ENCODE measurements at regions of chr7 and their contacts with region 1.

Region 1: DNA sequence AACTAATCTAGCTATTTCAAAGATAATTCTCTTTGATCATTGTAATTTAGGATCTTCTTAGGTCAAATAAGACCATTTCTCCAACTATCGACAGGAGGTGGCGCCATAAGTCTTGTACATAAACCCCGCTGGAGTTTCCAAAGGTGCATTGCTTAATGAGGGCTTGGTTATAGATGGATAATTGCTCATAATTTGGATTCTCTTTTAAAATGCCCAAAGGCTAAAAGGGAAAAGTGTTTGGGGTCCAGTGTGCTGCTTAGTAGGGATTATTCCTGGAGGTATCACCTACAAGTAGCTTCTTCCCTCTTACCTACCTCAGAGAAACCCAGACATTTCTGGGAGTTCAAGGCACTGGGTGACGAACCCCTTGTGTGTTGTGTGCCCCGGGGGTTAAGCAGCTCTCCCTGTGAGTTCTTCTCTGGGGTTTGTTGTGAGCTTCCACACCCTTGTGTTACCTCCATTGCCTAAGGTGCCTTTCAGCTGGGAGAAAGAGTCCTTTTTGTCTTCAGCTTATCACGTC is 75.2 kb downstream of the PAXIP1 start:
- DNase-seq: no peak
- ATAC-seq: peak; percentile 86

Region 2: DNA sequence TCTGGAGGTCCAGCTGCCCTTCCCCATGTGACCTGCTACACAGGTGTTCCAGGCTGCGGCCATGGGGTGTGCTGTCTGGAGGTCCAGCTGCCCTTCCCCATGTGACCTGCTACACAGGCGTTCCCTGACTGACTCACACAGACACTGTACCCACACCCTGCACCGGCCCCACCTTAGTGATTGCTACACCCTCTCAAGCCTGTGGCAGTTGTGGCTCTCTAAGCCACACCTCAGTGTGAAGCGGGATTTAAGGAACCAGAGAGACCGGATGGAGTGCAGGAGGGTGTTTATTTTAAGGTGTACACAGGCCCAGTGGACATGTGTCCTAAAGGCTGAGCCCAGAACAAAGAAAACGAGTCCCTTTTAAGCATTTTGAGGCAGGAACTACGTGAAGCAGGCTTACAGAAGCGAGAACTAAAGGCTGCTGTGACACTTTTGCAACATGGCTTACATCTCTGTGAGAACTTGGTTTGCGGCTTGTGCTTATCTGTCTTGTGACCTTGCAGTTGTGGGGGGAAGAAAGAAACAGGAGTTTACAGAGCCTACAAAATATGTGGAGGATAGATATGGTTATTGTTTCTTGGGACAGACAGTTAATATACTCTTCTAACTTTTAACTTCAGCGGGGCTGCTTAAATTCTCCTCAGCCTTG is 251.1 kb before region 1 on chr7:
- intact Hi-C with region 1: no loop called
- DNase-seq: no peak
- ATAC-seq: no peak

Region 3: GRCh38 chr7:154881026-154881425 is 46.7 kb before region 1 on chr7:
- intact Hi-C with region 1: no loop called
- DNase-seq: no peak
- ATAC-seq: no peak

Region 4: DNA sequence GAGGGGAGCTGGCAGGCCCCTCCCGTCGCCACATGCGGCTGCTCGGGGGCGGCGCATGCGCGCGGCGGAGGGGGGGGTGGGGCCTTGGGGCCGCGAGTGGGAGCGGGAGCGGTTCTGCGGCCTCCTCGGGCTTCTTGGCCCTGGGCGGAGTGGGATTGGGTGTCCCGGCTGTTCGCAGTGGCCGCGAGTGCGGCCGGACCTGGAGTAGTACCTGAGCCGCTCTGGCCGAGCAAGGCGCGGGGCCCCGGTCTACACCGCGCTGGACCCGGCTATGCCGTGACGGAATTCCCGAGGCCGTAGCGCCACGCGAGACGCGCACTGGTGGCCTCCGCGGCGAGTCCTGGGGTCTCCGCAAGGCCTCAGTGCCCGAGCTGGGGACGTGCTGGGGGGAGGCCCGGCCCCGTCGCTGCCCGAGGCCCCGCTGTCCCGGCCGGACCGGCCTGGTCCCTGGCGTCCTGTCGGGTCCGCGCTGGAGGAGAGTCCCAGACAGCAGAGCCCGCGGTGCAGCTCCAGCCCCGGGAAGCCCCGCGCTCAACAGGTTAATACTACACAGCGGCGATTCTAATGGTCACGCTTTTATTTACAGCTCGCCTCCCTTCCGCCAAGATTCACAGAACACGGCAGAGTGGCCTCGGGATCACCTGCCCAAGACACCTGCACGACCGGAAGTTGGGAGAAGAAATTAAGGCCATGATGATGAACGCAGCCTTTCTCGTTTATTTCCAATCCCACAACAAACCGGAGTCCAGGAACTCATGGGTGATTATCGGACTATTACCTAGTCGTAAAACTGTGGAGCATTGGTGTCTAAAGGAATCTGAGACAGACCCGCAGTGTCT is 75.9 kb after region 1 on chr7:
- intact Hi-C with region 1: loop called (anchors 5 kb)
- DNase-seq: peak; percentile 89
- ATAC-seq: peak; percentile 98

Region 5: GRCh38 chr7:155344600-155345433 is 417.1 kb after region 1 on chr7:
- intact Hi-C with region 1: loop called (anchors 2 kb)
- DNase-seq: peak; percentile 93
- ATAC-seq: peak; percentile 94

Measured in Right ventricle myocardium inferior (tissue), 1 donor.